ENCODE measurements at regions of chr1 and their contacts with region 1.

Region 1: GRCh38 chr1:209398313-209398991 is 185.1 kb upstream of the CAMK1G start:
- DNase-seq: no peak
- ATAC-seq: no peak
- H3K4me3 ChIP-seq: no peak overlapping the region
- H3K27ac ChIP-seq: no peak overlapping the region
- H3K4me1 ChIP-seq: no peaks in the 10 kb centered on the region
- H3K27me3 ChIP-seq: peaks cover 0 to 5% of the 10 kb centered on the region in 2 experiments; a peak in 2 of 5 replicates
- CTCF ChIP-seq: no peak
- EP300 ChIP-seq: no peak
- POLR2A ChIP-seq: no peak
- RAD21 ChIP-seq: no peak

Region 2: GRCh38 chr1:209428241-209428921 is 29.9 kb after region 1 on chr1:
- CTCF ChIA-PET with region 1: no interaction called
- POLR2A ChIA-PET with region 1: interaction called, 3 read pairs
- in situ Hi-C with region 1: no loop called
- intact Hi-C with region 1: loop called (anchors 1 kb)
- DNase-seq: peak in 1 of 4 experiments; percentile 17
- ATAC-seq: peak; percentile 36
- H3K4me3 ChIP-seq: no peak overlapping the region
- H3K27ac ChIP-seq: no peak overlapping the region
- H3K4me1 ChIP-seq: no peaks in the 10 kb centered on the region
- H3K27me3 ChIP-seq: peaks cover 0 to 8% of the 10 kb centered on the region in 2 experiments; a peak in 1 of 5 replicates
- CTCF ChIP-seq: no peak
- EP300 ChIP-seq: no peak
- POLR2A ChIP-seq: no peak
- RAD21 ChIP-seq: no peak

Region 3: DNA sequence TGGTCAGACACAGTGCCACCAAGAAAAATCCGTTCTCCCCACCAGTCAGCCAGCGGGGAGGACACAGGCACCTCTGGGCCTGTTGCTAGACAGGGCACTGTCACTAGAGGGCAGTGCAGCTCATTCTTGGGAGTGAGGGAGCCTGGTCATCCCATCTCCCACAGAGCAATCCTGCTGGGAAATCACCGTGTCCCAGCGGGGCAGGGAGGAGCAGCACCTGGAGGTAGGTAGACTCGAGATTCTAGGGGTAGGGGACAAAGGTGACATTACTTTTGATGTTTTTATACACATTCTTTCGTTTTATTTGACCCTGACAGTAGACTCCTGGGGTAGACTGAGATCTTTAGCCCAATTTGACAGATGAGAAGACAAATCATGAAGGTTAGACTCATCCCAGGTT is 178.3 kb after region 1 on chr1:
- CTCF ChIA-PET with region 1: no interaction called
- POLR2A ChIA-PET with region 1: no interaction called
- in situ Hi-C with region 1: no loop called
- intact Hi-C with region 1: no loop called
- DNase-seq: peak; percentile 76 to 83 (median 82)
- ATAC-seq: peak; percentile 99
- H3K4me3 ChIP-seq: no peak overlapping the region
- H3K27ac ChIP-seq: no peak overlapping the region
- H3K4me1 ChIP-seq: no peaks in the 10 kb centered on the region
- H3K27me3 ChIP-seq: peaks cover 3% of the 10 kb centered on the region in 2 experiments; a peak in 2 of 5 replicates
- CTCF ChIP-seq: peak; percentile 85 to 96 (median 94)
- EP300 ChIP-seq: no peak
- POLR2A ChIP-seq: no peak
- RAD21 ChIP-seq: peak; percentile 88 to 94